BJ (cell line): ENCODE measurements at regions of chr7 and their contacts with region 1.

Region 1: DNA sequence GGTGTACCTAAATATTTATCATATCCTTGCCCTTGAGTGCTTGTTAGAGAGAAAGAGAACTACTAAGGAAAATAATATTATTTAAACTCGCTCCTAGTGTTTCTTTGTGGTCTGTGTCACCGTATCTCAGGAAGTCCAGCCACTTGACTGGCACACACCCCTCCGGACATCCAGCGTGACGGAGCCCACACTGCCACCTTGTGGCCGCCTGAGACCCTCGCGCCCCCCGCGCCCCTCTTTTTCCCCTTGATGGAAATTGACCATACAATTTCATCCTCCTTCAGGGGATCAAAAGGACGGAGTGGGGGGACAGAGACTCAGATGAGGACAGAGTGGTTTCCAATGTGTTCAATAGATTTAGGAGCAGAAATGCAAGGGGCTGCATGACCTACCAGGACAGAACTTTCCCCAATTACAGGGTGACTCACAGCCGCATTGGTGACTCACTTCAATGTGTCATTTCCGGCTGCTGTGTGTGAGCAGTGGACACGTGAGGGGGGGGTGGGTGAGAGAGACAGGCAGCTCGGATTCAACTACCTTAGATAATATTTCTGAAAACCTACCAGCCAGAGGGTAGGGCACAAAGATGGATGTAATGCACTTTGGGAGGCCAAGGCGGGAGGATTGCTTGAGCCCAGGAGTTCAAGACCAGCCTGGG is 11.4 kb downstream of the SERPINE1 start:
- DNase-seq: peak; percentile 83
- H3K4me3 ChIP-seq: no peak overlapping the region
- H3K27me3 ChIP-seq: no peaks in the 10 kb centered on the region
- CTCF ChIP-seq: peak; percentile 86

Region 2: DNA sequence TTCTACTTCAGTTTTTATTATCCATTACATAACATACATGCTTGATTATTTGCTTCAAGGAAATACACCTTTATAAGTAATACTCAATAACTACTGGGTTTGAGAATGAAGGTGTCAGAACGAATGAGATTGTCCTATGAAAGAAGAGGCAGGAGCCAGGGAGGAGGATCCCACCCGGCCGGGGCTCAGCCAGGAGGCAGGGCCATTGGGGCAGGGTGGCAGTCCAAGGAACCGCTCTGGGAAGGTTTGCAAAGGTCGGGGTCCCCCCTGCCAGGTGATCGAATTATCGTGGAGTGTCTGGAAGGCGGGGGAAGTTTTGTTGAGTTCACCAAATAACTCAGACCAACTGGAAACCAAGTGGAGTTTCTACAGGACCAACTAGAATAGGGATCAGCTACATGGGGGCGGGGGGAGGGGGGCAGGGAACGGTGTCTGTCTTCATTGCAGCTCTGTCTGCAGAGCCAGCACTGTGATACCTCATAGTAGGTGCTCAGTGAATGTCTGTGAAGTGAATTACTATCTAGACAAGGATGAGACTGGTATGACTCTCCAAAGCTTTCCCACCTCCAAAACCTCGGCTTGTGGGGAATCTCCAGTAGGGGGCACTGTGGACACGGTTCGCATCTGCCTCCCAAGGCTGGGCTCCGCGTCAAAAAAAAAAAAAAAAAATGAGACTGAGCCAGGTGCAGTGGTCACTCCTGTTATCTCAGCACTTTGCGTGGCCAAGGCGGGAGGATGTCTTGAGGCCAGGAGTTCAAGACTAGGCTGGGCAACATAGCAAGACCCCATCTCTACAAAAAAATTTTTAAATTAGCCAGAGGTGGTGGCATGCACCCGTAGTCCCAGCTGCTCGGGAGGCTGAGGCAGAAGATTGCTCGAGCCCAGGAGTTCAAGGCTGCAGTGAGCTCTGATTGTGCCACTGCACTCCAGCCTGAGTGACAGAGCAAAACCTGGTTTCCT is 43.6 kb before region 1 on chr7:
- CTCF ChIA-PET with region 1: interaction called, 25 read pairs
- POLR2A ChIA-PET with region 1: no interaction called
- DNase-seq: no peak
- H3K4me3 ChIP-seq: no peak overlapping the region
- H3K27me3 ChIP-seq: no peaks in the 10 kb centered on the region
- CTCF ChIP-seq: peak; percentile 79

Region 3: DNA sequence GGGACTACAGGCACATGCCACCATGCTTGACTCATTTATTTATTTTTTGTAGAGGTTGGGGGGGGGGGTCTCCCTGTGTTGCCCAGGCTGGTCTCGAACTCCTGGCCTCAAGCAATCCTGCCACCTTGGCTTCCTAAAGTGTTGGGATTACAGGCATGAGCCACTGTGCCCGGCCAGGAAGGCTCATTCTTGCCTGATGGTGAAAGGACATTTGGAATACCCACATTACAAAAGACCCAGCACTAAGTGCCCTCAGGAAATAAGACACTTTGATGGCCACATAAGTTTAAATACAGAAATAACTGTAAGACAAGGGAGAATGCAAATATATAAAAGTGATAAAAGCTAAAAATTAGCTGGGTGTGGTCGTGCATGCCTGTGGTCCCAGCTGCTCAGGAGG is 19.5 kb before region 1 on chr7:
- CTCF ChIA-PET with region 1: interaction called, 3 read pairs
- POLR2A ChIA-PET with region 1: interaction called, 12 read pairs
- DNase-seq: no peak
- H3K4me3 ChIP-seq: no peak overlapping the region
- H3K27me3 ChIP-seq: no peaks in the 10 kb centered on the region
- CTCF ChIP-seq: no peak

Region 4: DNA sequence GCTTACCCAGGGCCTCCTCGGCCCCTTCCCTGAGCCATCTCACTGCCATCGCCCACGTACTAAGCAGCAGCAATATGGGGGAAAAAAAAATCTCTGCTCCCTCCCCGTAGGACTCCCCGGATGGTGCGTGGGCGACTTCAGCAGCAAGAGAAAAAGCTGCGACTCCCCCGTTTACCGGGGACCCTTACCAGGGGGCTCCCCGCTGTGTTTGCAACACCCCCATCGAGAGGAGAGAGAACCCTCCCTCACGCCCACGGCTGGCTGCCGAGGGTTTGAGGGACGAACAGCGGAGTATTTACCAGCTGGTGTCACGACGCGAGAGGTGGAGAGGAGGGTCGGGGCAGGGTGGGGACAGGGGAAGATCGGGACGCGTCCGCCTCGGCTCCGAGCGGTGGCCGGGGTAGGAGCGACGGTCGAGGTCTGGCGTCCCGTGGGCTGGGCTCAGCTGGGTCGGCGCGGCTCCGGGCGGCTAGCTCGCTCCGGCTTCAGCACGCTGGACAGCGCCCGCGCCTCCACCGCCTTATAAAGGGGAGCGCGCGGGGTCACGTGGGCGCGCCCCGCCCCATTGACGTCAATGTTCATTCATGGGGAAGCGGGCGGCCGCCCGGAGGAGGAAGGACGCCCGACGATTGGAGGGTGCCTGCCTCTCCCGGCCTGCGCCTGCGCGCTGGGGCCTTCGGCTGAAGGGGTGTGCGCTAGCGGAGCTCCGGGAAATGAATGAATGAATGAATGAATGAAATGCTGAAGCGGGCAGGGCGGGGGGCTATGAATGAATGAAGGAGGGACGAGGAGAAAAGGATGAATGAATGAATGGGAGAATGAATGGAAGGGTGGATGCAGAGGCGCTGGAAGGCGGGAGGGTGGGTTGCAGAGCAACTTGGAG is 27.0 kb after region 1 on chr7 and contains the start of gene VGF:
- CTCF ChIA-PET with region 1: interaction called, 23 read pairs
- POLR2A ChIA-PET with region 1: no interaction called
- DNase-seq: peak; percentile 33
- H3K4me3 ChIP-seq: no peak within 1 kb of the TSS
- H3K27me3 ChIP-seq: peaks cover 22% of the 10 kb centered on the region
- CTCF ChIP-seq: no peak
- polyA plus RNA-seq, gene VGF: 0.04 TPM in 1 of 2 replicates, not detected in the other

Region 5: DNA sequence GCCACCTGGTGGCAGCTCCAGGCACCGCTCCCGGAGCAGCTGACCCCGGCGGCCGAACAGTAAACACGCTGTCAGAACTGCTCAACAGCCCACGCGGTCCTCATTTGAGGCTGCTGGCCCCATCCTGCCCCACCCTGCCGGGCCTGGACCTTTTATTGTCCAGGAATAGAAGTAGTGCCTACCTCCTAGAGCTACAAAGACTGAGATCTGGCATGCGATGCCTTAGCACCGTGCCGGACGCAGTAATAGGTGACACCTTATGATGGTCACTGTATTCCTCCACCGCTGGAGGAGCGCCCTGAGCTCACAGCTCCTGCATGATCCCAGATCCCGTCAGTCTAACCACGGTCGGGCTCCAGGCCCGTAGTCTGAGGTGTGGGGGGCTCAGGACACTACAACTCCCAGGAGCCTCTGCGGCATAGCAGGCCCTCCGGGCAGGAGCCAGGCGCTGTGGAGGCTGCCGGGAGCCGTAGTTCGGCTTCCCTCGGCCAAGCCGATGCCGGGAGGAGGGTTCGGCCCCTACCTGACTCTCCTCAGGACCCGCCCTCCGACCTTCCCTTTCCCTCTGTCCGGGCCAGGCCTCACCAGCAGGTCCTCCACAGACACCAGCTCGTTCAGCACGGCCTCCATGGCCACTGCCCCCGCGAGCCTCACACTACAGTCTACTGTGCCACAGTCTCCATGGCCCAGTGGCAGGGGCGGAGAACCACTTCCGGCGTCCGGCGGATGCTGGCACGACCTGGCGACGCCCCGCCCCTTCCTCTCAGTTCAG is 106.2 kb after region 1 on chr7 and contains the start of gene FIS1:
- CTCF ChIA-PET with region 1: interaction called, 18 read pairs
- POLR2A ChIA-PET with region 1: no interaction called
- DNase-seq: peak; percentile 47
- H3K4me3 ChIP-seq: peak within 1 kb of the TSS; percentile 60
- H3K27me3 ChIP-seq: no peaks in the 10 kb centered on the region
- CTCF ChIP-seq: peak; percentile 92
- polyA plus RNA-seq, gene FIS1: 276 and 329 TPM in 2 replicates